Heart right ventricle (tissue), 16 donors: ENCODE measurements at regions of chr20 and their contacts with region 1.

Region 1: GRCh38 chr20:4108495-4109306 is 93.3 kb upstream of the RNF24 start:
- DNase-seq: peak; percentile 32 to 73
- ATAC-seq: peak; percentile 83 to 91 (median 87)
- H3K4me3 ChIP-seq: no peak overlapping the region
- H3K27ac ChIP-seq: no peak overlapping the region
- H3K4me1 ChIP-seq: peaks cover 0 to 29% (median 14%) of the 10 kb centered on the region in 9 donors
- H3K27me3 ChIP-seq: no peaks in the 10 kb centered on the region
- CTCF ChIP-seq: peak; percentile 91 to 99 (median 96)

Region 2: DNA sequence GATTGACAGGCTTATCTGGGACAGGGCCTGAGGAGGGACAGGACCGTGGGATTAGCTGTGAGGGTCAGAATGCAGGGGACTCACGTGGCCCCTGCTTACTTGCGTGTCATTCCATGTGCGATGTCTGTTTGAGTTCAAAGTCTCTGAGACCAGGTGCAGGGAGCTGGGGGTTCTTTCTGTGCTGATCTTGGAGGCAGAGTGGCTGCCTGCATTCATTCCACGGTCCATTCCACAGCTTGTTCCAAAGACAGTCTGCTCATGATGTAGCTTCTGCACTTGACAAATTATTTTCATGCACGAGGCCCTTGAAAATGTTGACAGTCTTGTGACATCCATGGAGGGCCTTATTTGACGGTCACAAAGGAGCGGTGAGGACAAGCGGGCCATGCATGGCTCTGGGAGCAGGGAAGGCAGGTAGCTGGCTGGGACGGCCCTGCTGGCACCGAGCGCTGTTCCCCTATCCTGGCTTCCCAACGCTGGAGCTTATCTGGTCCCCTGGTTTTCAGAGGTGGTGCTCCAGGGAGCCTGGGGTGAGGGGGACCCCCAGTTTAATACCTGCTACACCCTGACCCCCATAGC is 62.9 kb after region 1 on chr20:
- intact Hi-C with region 1: loop called in 3 of 10 experiments (anchors 2 kb)
- DNase-seq: no peak
- ATAC-seq: peak in 2 of 8 donors; percentile 5 to 36
- H3K4me3 ChIP-seq: peak overlapping the region; percentile 3 to 66 (median 60)
- H3K27ac ChIP-seq: peak overlapping the region in 7 of 10 donors; percentile 16 to 78 (median 45)
- H3K4me1 ChIP-seq: peaks cover 0 to 23% (median 12%) of the 10 kb centered on the region in 9 donors
- H3K27me3 ChIP-seq: no peaks in the 10 kb centered on the region
- CTCF ChIP-seq: no peak

Region 3: DNA sequence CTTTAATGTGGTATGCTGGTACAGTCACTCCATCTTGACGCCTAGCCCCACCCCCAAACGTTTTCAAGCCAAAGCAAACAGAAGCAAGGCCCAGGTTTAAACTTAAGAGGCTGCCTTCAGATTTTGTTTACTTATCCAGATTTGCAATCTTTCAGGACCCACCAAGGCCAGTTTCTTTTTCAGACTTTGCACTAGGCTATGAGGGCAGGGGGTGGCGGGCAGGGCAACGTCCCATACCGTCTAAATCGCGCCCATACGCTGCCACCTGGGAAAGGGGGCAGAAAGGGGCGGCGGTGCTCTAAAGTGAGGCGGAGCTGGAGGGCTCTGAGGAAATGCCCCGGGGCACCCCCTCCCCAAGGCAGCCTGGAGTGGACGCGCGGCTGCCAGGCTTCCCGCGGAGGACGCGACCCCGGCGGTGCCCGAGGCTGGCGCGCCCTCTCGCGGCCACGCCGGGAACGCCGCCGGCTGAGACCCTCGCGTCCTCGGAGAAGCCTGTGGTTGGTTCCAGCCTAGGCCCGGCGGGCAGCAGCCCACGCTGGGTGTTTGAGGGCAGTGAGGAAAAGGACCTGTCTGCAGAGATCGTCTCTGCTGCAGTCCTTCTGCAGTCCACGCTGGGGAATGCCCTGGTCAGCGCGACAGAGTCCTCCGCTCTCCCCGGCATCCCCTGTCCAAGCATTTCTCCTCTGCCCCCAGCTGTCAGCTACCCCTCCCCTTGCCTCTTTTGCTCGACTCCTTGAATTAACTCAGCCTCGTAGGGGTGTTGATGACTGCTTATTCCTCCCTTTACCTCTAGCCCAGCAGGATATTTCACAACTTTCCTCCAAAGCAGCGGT is 483.8 kb after region 1 on chr20:
- intact Hi-C with region 1: loop called in 8 of 10 experiments (anchors 5 kb)
- DNase-seq: peak in 1 of 2 donors; percentile 55
- ATAC-seq: peak; percentile 68 to 93 (median 77)
- H3K4me3 ChIP-seq: peak overlapping the region in 8 of 10 donors; percentile 13 to 55 (median 42)
- H3K27ac ChIP-seq: no peak overlapping the region
- H3K4me1 ChIP-seq: peaks cover 0 to 13% (median 9%) of the 10 kb centered on the region in 9 donors
- H3K27me3 ChIP-seq: peaks cover 0 to 25% (median 4%) of the 10 kb centered on the region in 7 donors
- CTCF ChIP-seq: peak; percentile 77 to 98 (median 94)

Region 4: GRCh38 chr20:4720041-4720976 is 611.6 kb after region 1 on chr20:
- intact Hi-C with region 1: loop called in 1 of 10 experiments (anchors 10 kb)
- DNase-seq: peak; percentile 67 to 83
- ATAC-seq: peak; percentile 81 to 93 (median 90)
- H3K4me3 ChIP-seq: peak overlapping the region in 1 of 10 donors; percentile 4
- H3K27ac ChIP-seq: peak overlapping the region in 9 of 10 donors; percentile 34 to 90 (median 67)
- H3K4me1 ChIP-seq: peaks cover 0 to 18% (median 13%) of the 10 kb centered on the region in 9 donors
- H3K27me3 ChIP-seq: no peaks in the 10 kb centered on the region
- CTCF ChIP-seq: peak; percentile 38 to 86 (median 77)